ENCODE measurements at regions of chr14 and their contacts with region 1.

Region 1: GRCh38 chr14:78164238-78164853 is 5.8 kb upstream of the NRXN3 start:
- DNase-seq: peak; percentile 34
- H3K4me3 ChIP-seq: no peak overlapping the region
- H3K27ac ChIP-seq: no peak overlapping the region
- H3K4me1 ChIP-seq: no peaks in the 10 kb centered on the region
- H3K27me3 ChIP-seq: peaks cover 81% of the 10 kb centered on the region
- CTCF ChIP-seq: peak; percentile 72

Region 2: GRCh38 chr14:78598041-78598920 is 433.9 kb after region 1 on chr14:
- CTCF ChIA-PET with region 1: no interaction called
- POLR2A ChIA-PET with region 1: no interaction called
- intact Hi-C with region 1: loop called (anchors 5 kb)
- DNase-seq: peak; percentile 69
- H3K4me3 ChIP-seq: no peak overlapping the region
- H3K27ac ChIP-seq: no peak overlapping the region
- H3K4me1 ChIP-seq: no peaks in the 10 kb centered on the region
- H3K27me3 ChIP-seq: peaks cover 14% of the 10 kb centered on the region
- CTCF ChIP-seq: peak; percentile 96

Measured in A673 (cell line).